Naive thymus-derived CD4-positive, alpha-beta T cell (primary cell): ENCODE measurements at regions of chr20 and their contacts with region 1.

Region 1: DNA sequence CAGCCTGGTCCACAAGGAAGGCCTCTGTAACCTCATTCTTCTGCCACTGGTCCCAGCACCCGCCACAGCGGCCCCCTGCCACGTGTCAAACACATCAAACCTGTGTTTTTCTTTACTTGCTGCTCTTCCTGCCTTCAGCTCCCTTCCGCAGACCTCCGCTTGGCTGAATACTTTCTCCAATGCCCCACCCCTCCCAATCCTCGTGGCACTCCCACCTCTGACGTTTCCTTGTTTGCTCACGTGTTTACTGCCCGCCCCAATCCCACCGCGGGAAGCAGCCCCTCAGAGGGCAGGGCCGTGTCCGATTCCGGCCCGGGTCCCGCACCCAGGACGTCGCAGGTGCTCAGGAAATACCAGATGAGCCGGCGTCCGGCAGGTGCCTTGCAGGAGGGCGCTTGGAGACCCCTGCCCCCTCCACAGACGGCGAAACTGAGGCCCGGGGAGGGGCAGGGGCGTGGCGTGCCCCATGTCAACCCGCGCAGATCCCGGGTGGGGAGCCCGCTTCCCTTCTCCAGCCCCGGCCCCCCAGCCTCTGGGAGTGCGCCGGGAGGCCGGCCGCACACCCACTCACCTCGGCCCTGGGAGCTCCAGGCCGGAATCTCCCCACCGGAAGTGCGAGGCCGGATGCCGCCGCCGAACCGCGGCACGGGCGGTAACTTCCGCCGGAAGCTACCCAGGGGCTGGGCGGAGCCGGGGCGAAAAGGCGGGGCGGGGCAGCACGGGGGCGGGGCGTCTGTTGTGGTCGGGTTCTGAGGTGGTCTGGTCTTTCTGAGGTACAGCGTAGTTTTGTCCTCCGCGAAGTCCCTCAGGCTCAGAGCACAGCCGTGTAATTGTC is 42.4 kb downstream of the ELMO2 start:
- DNase-seq: peak; percentile 80 to 91 (median 85)
- ATAC-seq: peak; percentile 87
- H3K4me3 ChIP-seq: peak overlapping the region; percentile 95
- H3K4me3 Mint-ChIP-seq: peak overlapping the region; percentile 89 to 98 (median 92)
- H3K27ac ChIP-seq: peak overlapping the region; percentile 99
- H3K27ac Mint-ChIP-seq: peak overlapping the region; percentile 77 to 98 (median 95)
- H3K4me1 ChIP-seq: peaks cover 60 to 67% of the 10 kb centered on the region in 2 donors
- H3K4me1 Mint-ChIP-seq: peaks cover 54 to 92% (median 74%) of the 10 kb centered on the region in 7 donors
- H3K27me3 ChIP-seq: no peaks in the 10 kb centered on the region
- H3K27me3 Mint-ChIP-seq: no peaks in the 10 kb centered on the region

Region 2: DNA sequence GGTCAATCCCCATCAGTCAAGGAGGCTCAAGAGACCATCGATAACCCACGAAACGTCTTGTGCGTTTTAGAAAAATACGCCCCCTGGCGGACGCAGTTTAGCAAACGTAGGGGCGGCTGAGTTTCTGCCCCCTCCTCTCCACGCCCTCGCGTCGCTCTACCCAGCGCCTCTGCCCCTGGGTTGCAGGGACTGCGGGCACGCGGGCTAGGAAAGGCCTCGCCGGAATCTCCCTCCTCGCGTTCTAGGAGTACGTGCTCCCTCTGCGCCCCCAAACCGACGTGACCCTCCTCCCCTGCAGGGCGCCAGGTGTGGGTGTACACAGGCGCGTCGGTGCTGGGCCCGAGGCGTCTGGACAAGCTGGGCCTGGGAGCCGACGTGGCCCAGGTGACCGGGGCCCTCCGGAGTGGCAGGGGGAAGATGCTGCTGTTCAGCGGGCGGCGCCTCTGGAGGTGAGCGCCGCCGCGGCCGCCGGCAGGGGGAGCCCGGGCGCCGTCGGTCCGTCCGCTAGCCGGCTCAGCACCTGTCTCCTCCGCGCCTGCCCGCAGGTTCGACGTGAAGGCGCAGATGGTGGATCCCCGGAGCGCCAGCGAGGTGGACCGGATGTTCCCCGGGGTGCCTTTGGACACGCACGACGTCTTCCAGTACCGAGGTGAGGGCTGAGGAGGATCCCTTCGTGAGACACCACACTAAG is 350.0 kb before region 1 on chr20:
- CTCF ChIA-PET with region 1: interaction called, 3 read pairs
- POLR2A ChIA-PET with region 1: no interaction called
- intact Hi-C with region 1: loop called in 1 of 2 experiments (anchors 5 kb)
- DNase-seq: peak; percentile 39 to 73 (median 60)
- ATAC-seq: peak; percentile 76
- H3K4me3 ChIP-seq: peak overlapping the region; percentile 32
- H3K4me3 Mint-ChIP-seq: peak overlapping the region; percentile 23 to 76 (median 58)
- H3K27ac ChIP-seq: no peak overlapping the region
- H3K27ac Mint-ChIP-seq: peak overlapping the region in 3 of 9 donors; percentile 1 to 43 (median 29)
- H3K4me1 ChIP-seq: peaks cover 24 to 27% of the 10 kb centered on the region in 2 donors
- H3K4me1 Mint-ChIP-seq: peaks cover 38 to 61% (median 48%) of the 10 kb centered on the region in 7 donors
- H3K27me3 ChIP-seq: peaks cover 15 to 16% of the 10 kb centered on the region in 2 donors
- H3K27me3 Mint-ChIP-seq: peaks cover 52 to 68% (median 55%) of the 10 kb centered on the region in 5 donors

Region 3: DNA sequence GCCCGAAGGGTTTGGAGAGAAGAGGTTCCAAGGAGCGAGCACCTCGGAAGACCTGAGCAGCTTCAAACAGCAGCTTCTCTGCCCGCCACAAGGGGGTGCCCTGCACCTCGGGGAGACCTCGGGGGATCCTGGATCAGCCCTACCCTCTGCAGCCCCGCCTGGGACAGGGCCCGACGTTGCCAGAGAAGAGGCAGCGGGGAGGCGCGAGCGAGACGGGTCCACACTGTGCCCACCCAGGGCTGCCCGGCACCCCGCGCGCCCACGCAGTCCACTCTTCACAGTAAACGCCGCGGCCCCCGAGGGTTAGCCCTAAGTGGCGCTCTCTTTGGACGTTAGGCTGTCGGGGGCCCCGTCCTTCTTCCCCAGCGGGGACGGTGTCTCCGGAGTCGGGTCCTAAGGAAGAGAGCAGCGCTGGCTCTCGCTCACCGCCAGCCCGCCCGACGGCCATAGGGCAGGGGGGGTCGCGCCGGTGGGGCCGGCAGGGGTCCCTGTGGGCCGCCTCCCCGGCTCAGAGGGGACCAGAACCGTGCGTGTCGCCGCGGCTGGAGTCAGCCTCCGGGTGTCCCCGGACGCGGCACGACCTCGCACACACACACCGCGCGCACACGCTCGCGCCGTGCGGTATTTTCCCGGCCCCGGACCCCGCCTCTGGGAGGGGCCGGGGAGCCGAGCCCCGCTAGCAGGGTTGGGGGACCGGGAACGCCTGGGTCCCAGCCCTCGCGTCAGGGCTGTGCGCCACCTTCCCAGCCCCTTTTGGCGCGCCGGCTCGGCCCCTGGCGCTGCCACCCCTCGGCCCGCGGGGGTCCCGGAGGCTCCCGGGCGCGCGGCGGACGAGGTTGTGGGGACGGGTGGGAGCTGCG is 56.6 kb before region 1 on chr20:
- CTCF ChIA-PET with region 1: interaction called, 3 read pairs
- POLR2A ChIA-PET with region 1: no interaction called
- intact Hi-C with region 1: loop called (anchors 1 to 5 kb)
- DNase-seq: peak; percentile 58 to 79 (median 74)
- ATAC-seq: peak; percentile 90
- H3K4me3 ChIP-seq: peak overlapping the region; percentile 43
- H3K4me3 Mint-ChIP-seq: peak overlapping the region; percentile 24 to 83 (median 73)
- H3K27ac ChIP-seq: no peak overlapping the region
- H3K27ac Mint-ChIP-seq: no peak overlapping the region
- H3K4me1 ChIP-seq: peaks cover 0 to 5% of the 10 kb centered on the region in 2 donors
- H3K4me1 Mint-ChIP-seq: peaks cover 4 to 28% (median 15%) of the 10 kb centered on the region in 7 donors
- H3K27me3 ChIP-seq: peaks cover 7 to 15% of the 10 kb centered on the region in 2 donors
- H3K27me3 Mint-ChIP-seq: peaks cover 60 to 76% (median 71%) of the 10 kb centered on the region in 5 donors

Region 4: GRCh38 chr20:46349035-46349741 is 14.8 kb before region 1 on chr20:
- CTCF ChIA-PET with region 1: interaction called, 4 read pairs
- POLR2A ChIA-PET with region 1: interaction called, 16 read pairs
- intact Hi-C with region 1: no loop called
- DNase-seq: peak in 7 of 9 donors; percentile 30 to 57 (median 39)
- ATAC-seq: peak; percentile 68
- H3K4me3 ChIP-seq: no peak overlapping the region
- H3K4me3 Mint-ChIP-seq: no peak overlapping the region
- H3K27ac ChIP-seq: no peak overlapping the region
- H3K27ac Mint-ChIP-seq: peak overlapping the region in 5 of 9 donors; percentile 23 to 80 (median 40)
- H3K4me1 ChIP-seq: no peaks in the 10 kb centered on the region
- H3K4me1 Mint-ChIP-seq: peaks cover 19 to 33% (median 27%) of the 10 kb centered on the region in 7 donors
- H3K27me3 ChIP-seq: no peaks in the 10 kb centered on the region
- H3K27me3 Mint-ChIP-seq: peaks cover 0 to 8% (median 0%) of the 10 kb centered on the region in 5 donors

Region 5: DNA sequence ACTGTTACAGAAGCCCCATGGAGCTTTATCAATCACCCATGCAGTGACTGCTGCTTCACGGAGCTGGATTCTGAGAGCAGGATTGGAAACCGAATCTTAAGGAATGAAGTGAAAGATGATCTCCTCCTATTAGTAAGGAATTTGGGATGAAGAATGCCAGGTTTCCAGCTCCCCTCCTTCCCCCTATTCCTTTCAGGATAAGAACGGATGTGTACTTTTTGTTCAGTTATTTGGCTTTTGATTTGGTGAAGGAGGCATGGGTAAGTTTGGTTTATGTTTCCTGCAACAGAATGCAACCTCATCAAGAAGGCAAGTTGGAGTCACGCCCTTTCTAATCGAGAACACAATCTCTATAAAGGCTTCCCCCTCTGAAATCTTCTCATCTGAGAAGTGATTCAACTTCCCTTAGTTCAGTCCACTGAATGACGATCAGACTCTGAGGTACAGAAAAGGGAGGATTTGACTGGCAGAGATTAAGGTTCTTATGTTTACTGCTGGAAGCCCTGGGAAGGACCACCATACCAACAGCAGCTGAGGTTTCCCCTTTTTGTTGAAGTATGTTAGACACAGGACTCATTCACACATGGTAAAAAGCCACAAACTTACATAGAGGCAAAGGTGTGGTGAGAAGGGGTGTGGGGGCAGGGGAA is 36.9 kb after region 1 on chr20:
- CTCF ChIA-PET with region 1: no interaction called
- POLR2A ChIA-PET with region 1: interaction called, 69 read pairs
- intact Hi-C with region 1: loop called (anchors 1 kb)
- DNase-seq: peak in 7 of 9 donors; percentile 63 to 86 (median 79)
- ATAC-seq: peak; percentile 90
- H3K4me3 ChIP-seq: peak overlapping the region; percentile 11
- H3K4me3 Mint-ChIP-seq: peak overlapping the region; percentile 58 to 87 (median 74)
- H3K27ac ChIP-seq: peak overlapping the region; percentile 79
- H3K27ac Mint-ChIP-seq: peak overlapping the region; percentile 90 to 96 (median 93)
- H3K4me1 ChIP-seq: peaks cover 56 to 69% of the 10 kb centered on the region in 2 donors
- H3K4me1 Mint-ChIP-seq: peaks cover 66 to 86% (median 74%) of the 10 kb centered on the region in 7 donors
- H3K27me3 ChIP-seq: no peaks in the 10 kb centered on the region
- H3K27me3 Mint-ChIP-seq: no peaks in the 10 kb centered on the region

Region 6: GRCh38 chr20:46689082-46689754 is 325.2 kb after region 1 on chr20 and contains the start of gene TP53RK:
- CTCF ChIA-PET with region 1: no interaction called
- POLR2A ChIA-PET with region 1: no interaction called
- intact Hi-C with region 1: loop called (anchors 1 to 5 kb)
- DNase-seq: peak; percentile 85 to 98 (median 96)
- ATAC-seq: peak; percentile 97
- H3K4me3 ChIP-seq: peak within 1 kb of the TSS; percentile 84
- H3K4me3 Mint-ChIP-seq: peak within 1 kb of the TSS; percentile 90 to 100 (median 96)
- H3K27ac ChIP-seq: peak within 1 kb of the TSS; percentile 90
- H3K27ac Mint-ChIP-seq: peak within 1 kb of the TSS; percentile 91 to 97 (median 95)
- H3K4me1 ChIP-seq: peaks cover 20 to 30% of the 10 kb centered on the region in 2 donors
- H3K4me1 Mint-ChIP-seq: peaks cover 38 to 54% (median 45%) of the 10 kb centered on the region in 7 donors
- H3K27me3 ChIP-seq: no peaks in the 10 kb centered on the region
- H3K27me3 Mint-ChIP-seq: no peaks in the 10 kb centered on the region
- total RNA-seq, gene TP53RK: 4.4 to 27.7 (median 17.7) TPM